ENCODE measurements at regions of chr13 and their contacts with region 1.

Region 1: GRCh38 chr13:100674848-100675660 is 459 bp upstream of the TMTC4 start:
- DNase-seq: peak; percentile 99 to 100
- H3K4me3 ChIP-seq: peak overlapping the region; percentile 93 to 94
- H3K27ac ChIP-seq: peak overlapping the region; percentile 75 to 82
- H3K4me1 ChIP-seq: peaks cover 3 to 10% of the 10 kb centered on the region in 2 donors
- H3K27me3 ChIP-seq: no peaks in the 10 kb centered on the region
- CTCF ChIP-seq: peak in 2 of 3 experiments; percentile 39 to 41

Region 2: GRCh38 chr13:99501184-99501847 is 1173.7 kb before region 1 on chr13 and contains the start of gene TM9SF2:
- intact Hi-C with region 1: loop called (anchors 5 kb)
- DNase-seq: peak; percentile 89 to 99
- H3K4me3 ChIP-seq: peak within 1 kb of the TSS; percentile 93 to 96
- H3K27ac ChIP-seq: peak within 1 kb of the TSS; percentile 83 to 87
- H3K4me1 ChIP-seq: peaks cover 27 to 37% of the 10 kb centered on the region in 2 donors
- H3K27me3 ChIP-seq: no peaks in the 10 kb centered on the region
- CTCF ChIP-seq: no peak
- total RNA-seq, gene TM9SF2: 56.8 TPM

Region 3: DNA sequence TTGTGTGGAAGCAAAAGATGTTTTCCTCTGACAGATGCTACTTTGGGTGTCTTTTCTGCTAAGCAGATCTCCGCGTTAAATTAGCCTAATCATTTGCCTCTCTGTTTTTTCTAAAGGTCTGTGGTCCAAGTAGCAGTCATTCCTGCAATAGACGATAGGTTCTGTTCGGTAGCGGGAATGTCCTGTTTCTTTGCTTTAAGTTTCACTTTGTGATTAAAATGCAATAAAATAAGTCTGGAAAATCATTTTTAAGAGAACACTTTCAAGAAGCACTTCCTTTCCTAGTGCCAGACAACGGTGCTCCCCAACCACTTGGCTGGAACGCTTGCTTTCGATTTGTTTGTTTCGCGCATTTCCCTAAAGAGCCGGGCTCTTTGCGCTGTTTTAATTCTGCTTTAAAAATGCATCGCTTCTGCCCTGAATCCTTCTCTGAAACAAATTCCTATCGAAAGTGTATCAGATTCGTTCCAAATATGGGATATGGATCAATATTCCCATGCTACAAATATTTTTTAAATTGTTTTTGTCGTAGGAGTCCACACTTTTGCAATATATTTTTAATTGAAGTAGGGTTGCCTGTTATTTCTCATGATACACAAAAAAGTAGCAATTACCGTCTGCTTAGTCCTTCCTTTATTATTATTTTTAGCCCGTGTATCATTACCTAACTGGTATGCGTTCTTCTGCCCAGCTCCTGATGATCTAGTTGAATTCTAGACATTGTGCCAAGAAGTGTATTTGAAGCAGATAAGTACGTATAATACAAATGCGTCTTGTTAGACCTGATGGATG is 679.3 kb before region 1 on chr13:
- intact Hi-C with region 1: loop called (anchors 5 kb)
- DNase-seq: peak in 1 of 2 donors; percentile 22
- H3K4me3 ChIP-seq: no peak overlapping the region
- H3K27ac ChIP-seq: no peak overlapping the region
- H3K4me1 ChIP-seq: no peaks in the 10 kb centered on the region
- H3K27me3 ChIP-seq: peaks cover 54% of the 10 kb centered on the region
- CTCF ChIP-seq: no peak

Region 4: DNA sequence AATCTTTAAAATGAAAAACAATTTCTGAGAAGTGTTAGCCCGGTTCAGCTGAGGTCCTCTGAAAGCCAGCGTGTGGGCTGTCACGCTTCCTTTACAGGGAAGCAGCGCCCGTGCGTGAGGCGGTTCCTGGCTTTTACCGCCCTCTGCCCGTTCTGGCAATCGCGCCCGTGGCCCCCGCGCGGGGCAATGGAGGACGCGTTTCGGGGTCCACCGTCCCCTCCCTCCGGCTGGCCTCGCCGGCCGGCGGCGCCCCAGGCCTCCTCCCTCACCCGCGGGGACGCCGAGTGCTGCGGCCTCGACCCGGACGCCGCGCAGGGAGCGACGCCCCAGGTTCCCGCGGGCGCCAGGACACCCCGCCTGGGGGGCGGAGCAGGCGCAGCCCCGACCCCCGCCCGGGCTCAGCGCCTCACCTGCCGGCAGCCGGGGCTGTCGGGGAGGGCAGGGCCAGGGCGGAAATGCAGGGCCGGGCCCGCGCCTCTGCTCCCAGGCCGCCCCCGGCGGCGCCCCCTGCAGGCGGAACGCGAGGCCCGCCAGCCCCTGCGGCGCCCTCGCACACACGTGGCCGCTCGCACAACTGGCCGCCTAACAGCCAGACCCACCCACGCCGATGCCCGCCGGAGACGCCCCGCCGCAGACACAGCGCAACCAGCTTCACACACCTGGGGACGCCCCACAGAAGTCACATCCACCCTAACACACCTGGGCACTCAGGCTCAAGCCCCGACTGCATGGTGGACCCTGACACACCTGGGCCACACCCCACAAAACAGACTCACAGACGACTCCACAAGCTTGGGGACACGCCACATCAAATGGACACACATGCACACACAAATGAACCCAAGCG is 86.5 kb before region 1 on chr13 and contains the start of gene GGACT:
- intact Hi-C with region 1: loop called (anchors 1 kb)
- DNase-seq: peak in 1 of 2 donors; percentile 76
- H3K4me3 ChIP-seq: peak within 1 kb of the TSS; percentile 88 to 96
- H3K27ac ChIP-seq: peak within 1 kb of the TSS; percentile 70 to 77
- H3K4me1 ChIP-seq: peaks cover 0 to 9% of the 10 kb centered on the region in 2 donors
- H3K27me3 ChIP-seq: no peaks in the 10 kb centered on the region
- CTCF ChIP-seq: peak; percentile 33 to 69 (median 54)
- total RNA-seq, gene GGACT: 1.2 TPM

Region 5: GRCh38 chr13:100721885-100722512 is 46.9 kb after region 1 on chr13:
- intact Hi-C with region 1: no loop called
- DNase-seq: no peak
- H3K4me3 ChIP-seq: no peak overlapping the region
- H3K27ac ChIP-seq: no peak overlapping the region
- H3K4me1 ChIP-seq: no peaks in the 10 kb centered on the region
- H3K27me3 ChIP-seq: no peaks in the 10 kb centered on the region
- CTCF ChIP-seq: peak in 1 of 3 experiments; percentile 43

Region 6: GRCh38 chr13:102596147-102597028 is 1921.3 kb after region 1 on chr13 and contains the start of gene TPP2:
- intact Hi-C with region 1: loop called (anchors 2 kb)
- DNase-seq: peak; percentile 96 to 99
- H3K4me3 ChIP-seq: peak within 1 kb of the TSS; percentile 67 to 81
- H3K27ac ChIP-seq: peak within 1 kb of the TSS; percentile 88 to 99
- H3K4me1 ChIP-seq: peaks cover 3 to 18% of the 10 kb centered on the region in 2 donors
- H3K27me3 ChIP-seq: no peaks in the 10 kb centered on the region
- CTCF ChIP-seq: no peak
- total RNA-seq, gene TPP2: 21.4 TPM

Measured in ascending aorta (tissue), 2 donors.